ENCODE measurements at regions of chr20 and their contacts with region 1.

Region 1: GRCh38 chr20:15799869-15800268 is 773.4 kb downstream of the KIF16B start:
- DNase-seq: no peak
- H3K4me3 Mint-ChIP-seq: no peak overlapping the region
- H3K27ac Mint-ChIP-seq: no peak overlapping the region
- H3K4me1 Mint-ChIP-seq: no peaks in the 10 kb centered on the region
- H3K27me3 Mint-ChIP-seq: no peaks in the 10 kb centered on the region

Region 2: DNA sequence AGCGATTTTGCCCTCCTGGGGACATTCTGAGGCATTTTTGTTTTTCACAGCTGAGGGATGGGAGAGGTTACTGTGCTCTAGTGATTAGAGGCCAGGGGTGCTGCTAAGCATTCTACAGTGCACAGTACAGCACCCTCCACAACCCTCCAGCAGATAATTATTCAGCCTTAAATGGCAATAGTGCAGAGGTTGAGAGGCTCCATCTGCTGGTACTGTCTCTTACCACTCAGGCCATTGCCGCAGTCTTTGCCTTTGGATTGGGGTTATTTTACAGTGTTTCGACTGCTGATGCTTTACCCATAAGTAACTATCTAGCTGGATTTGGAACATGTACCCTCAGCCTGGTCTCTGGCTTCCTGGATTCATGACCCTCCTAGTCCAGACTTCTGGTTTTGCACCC is 68.0 kb after region 1 on chr20:
- intact Hi-C with region 1: loop called (anchors 10 kb)
- DNase-seq: no peak
- H3K4me3 Mint-ChIP-seq: no peak overlapping the region
- H3K27ac Mint-ChIP-seq: no peak overlapping the region
- H3K4me1 Mint-ChIP-seq: no peaks in the 10 kb centered on the region
- H3K27me3 Mint-ChIP-seq: no peaks in the 10 kb centered on the region

Region 3: DNA sequence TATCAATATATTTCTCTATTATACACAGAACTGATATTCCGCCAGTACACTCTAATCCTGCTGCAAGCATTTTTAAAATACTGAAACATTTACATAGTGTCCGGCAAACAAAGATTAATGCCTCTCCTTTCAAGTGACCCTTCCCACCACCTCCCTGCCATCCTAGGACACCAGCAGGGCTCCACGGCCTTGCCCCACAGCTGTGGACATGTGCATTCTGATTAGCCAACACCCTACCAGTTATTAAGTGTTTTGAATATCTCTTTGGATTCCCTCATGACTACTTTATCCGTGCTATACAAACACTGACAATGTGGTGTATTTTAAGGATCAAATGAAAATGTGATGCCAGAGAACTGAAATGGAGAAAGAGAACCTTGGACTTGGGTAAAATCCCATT is 158.3 kb after region 1 on chr20:
- intact Hi-C with region 1: no loop called
- DNase-seq: no peak
- H3K4me3 Mint-ChIP-seq: no peak overlapping the region
- H3K27ac Mint-ChIP-seq: no peak overlapping the region
- H3K4me1 Mint-ChIP-seq: no peaks in the 10 kb centered on the region
- H3K27me3 Mint-ChIP-seq: no peaks in the 10 kb centered on the region

Region 4: GRCh38 chr20:16052456-16052855 is 252.6 kb after region 1 on chr20:
- intact Hi-C with region 1: no loop called
- DNase-seq: no peak
- H3K4me3 Mint-ChIP-seq: no peak overlapping the region
- H3K27ac Mint-ChIP-seq: no peak overlapping the region
- H3K4me1 Mint-ChIP-seq: no peaks in the 10 kb centered on the region
- H3K27me3 Mint-ChIP-seq: no peaks in the 10 kb centered on the region